ENCODE measurements at regions of chr14 and their contacts with region 1.

Region 1: DNA sequence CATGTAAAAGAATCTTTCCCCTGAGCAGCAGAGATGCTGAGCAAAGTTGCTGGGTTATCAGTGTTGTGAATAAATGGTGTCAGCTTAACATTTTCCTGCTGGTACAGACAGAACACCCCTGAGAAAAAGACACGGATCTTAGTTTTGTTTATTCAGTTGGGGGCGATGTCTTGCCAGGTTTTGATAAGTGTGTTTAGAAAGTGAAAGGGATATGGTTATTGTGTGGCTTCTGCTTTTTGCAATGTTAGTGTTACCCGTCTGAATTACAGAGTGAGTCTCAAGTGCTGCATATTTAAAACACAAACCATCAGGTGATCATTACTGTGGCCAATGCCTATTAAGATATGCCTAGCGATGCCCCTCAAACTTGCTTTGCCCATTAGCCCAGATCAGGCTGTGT is 864.6 kb upstream of the SEL1L start:
- DNase-seq: no peak
- H3K4me3 ChIP-seq: no peak overlapping the region
- H3K27ac ChIP-seq: no peak overlapping the region
- H3K4me1 ChIP-seq: no peaks in the 10 kb centered on the region
- H3K27me3 ChIP-seq: no peaks in the 10 kb centered on the region
- CTCF ChIP-seq: no peak
- POLR2A ChIP-seq: no peak

Region 2: DNA sequence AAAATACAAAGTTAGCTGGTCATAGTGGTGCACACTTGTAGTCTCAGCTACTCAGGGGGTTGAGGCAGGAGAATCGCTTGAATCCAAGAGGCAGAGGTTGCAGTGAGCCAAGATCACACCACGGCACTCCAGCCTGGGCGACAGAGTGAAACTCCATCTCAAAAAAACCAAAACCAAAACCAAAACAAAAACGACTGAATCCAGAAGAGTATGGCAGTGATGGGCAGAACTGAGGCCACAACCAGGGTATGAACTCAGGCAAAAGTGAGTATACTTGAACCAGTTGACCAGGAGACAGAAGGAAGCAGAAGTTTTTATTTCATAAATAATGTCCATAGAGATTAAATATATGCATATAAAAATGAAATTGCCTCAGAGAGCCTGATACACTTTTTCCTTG is 244.6 kb before region 1 on chr14:
- intact Hi-C with region 1: no loop called
- DNase-seq: no peak
- H3K4me3 ChIP-seq: no peak overlapping the region
- H3K27ac ChIP-seq: no peak overlapping the region
- H3K4me1 ChIP-seq: no peaks in the 10 kb centered on the region
- H3K27me3 ChIP-seq: no peaks in the 10 kb centered on the region
- CTCF ChIP-seq: no peak
- POLR2A ChIP-seq: no peak

Region 3: DNA sequence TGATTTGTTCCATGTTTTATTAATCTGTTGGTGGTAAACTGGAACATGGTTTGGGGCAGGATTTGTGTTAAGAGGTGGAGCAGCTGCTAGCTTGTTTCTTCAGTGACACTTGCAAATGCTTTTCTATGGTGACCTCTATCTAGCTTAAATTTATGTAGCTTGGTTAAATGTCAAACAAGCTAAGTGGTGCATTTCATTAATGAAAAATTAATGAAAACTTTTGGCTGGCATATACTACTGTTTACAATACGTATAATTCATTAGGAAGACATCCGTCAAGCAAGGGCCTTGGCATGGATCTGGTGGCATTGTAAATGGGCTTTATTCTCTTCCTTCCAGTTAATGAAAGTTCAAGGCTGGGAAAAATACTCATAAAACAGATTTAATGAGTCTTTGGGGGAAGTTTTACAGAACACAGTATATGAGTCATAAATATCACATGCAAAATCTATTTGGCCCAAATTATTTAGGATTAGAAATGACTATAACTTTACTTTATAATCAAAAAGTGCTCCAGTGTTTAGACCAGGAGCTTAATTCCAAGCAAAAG is 56.9 kb before region 1 on chr14:
- intact Hi-C with region 1: no loop called
- DNase-seq: no peak
- H3K4me3 ChIP-seq: no peak overlapping the region
- H3K27ac ChIP-seq: no peak overlapping the region
- H3K4me1 ChIP-seq: no peaks in the 10 kb centered on the region
- H3K27me3 ChIP-seq: no peaks in the 10 kb centered on the region
- CTCF ChIP-seq: no peak
- POLR2A ChIP-seq: no peak

Region 4: DNA sequence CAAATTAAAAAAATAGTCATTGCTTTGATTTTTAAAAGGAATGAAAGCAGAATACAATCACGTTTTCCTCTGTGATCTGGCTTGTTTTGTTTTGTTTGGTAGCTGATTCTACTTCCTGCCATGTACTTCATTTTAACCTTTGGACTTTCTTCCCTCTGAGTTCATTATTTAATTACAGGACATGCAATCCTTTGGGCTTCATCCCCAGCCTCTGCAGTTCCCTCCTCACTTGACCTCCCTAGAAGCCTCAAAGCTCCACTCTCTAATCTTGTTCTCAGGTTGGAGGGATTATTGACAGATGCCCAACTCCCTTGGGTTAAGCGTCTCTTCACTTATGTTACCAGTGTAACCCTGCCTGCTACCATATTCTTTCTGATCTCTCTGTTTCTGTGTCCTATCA is 103.3 kb after region 1 on chr14:
- intact Hi-C with region 1: loop called (anchors 10 kb)
- DNase-seq: no peak
- H3K4me3 ChIP-seq: no peak overlapping the region
- H3K27ac ChIP-seq: no peak overlapping the region
- H3K4me1 ChIP-seq: peaks cover 4% of the 10 kb centered on the region
- H3K27me3 ChIP-seq: no peaks in the 10 kb centered on the region
- CTCF ChIP-seq: no peak
- POLR2A ChIP-seq: no peak